RWPE1 (cell line): ENCODE measurements at regions of chr12 and their contacts with region 1.

Region 1: GRCh38 chr12:31895449-31896150 is 63.6 kb upstream of the RESF1 start:
- DNase-seq: no peak
- H3K27ac ChIP-seq: no peak overlapping the region
- CTCF ChIP-seq: no peak

Region 2: DNA sequence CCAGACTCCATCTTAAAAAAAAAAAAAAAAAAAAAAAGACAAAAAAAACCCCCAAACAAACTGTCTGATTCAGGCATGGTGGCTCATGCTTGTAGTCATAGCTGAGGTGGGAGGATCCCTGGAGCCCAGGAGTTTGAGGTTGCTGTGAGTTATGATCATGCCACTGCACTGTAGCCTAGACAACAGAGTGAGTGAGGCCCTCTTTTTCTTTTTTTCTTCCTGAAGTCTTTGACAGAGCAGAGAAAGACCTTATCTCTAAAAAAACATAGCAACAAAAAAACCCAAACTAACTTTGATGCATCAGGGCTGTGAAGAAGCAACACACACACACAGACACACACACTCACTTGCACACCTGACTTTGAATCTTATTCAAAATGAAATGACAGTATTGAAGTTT is 159.1 kb before region 1 on chr12:
- CTCF ChIA-PET with region 1: interaction called, 10 read pairs
- POLR2A ChIA-PET with region 1: no interaction called
- DNase-seq: no peak
- H3K27ac ChIP-seq: no peak overlapping the region
- CTCF ChIP-seq: no peak

Region 3: DNA sequence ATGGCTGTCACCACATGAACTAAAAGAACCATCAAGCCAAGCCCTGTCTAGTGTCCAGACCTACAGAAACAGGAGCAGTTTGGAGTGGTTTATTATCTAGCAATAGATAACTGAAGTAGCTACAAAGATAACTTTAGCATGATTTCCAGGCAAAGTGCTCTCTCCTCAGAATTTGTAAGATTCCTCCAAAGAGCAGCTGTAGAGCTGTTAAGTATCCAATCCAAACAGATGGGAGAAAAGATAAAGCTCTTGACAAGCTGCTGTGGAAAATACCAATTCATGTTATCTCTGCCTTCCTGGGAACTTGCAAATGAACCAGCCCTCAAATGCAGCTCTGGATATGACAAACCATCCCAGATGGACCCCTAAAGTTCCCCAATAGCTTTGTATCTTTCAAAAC is 15.3 kb before region 1 on chr12:
- CTCF ChIA-PET with region 1: no interaction called
- POLR2A ChIA-PET with region 1: no interaction called
- DNase-seq: no peak
- H3K27ac ChIP-seq: no peak overlapping the region
- CTCF ChIP-seq: no peak